ENCODE measurements at regions of chr6 and their contacts with region 1.

Region 1: GRCh38 chr6:156564127-156564806 is 212.9 kb upstream of the ARID1B start:
- DNase-seq: peak; percentile 36
- H3K4me3 ChIP-seq: no peak overlapping the region
- H3K27ac ChIP-seq: no peak overlapping the region
- H3K4me1 ChIP-seq: no peaks in the 10 kb centered on the region
- H3K27me3 ChIP-seq: no peaks in the 10 kb centered on the region
- CTCF ChIP-seq: peak; percentile 87 to 96

Region 2: GRCh38 chr6:155461556-155461955 is 1102.7 kb before region 1 on chr6:
- CTCF ChIA-PET with region 1: no interaction called
- dilution Hi-C with region 1: no loop called
- in situ Hi-C with region 1: no loop called
- intact Hi-C with region 1: no loop called
- DNase-seq: no peak
- H3K4me3 ChIP-seq: no peak overlapping the region
- H3K27ac ChIP-seq: no peak overlapping the region
- H3K4me1 ChIP-seq: no peaks in the 10 kb centered on the region
- H3K27me3 ChIP-seq: no peaks in the 10 kb centered on the region
- CTCF ChIP-seq: no peak

Region 3: GRCh38 chr6:156242206-156242605 is 322.1 kb before region 1 on chr6:
- CTCF ChIA-PET with region 1: no interaction called
- dilution Hi-C with region 1: no loop called
- in situ Hi-C with region 1: no loop called
- intact Hi-C with region 1: no loop called
- DNase-seq: no peak
- H3K4me3 ChIP-seq: no peak overlapping the region
- H3K27ac ChIP-seq: no peak overlapping the region
- H3K4me1 ChIP-seq: no peaks in the 10 kb centered on the region
- H3K27me3 ChIP-seq: no peaks in the 10 kb centered on the region
- CTCF ChIP-seq: no peak

Region 4: DNA sequence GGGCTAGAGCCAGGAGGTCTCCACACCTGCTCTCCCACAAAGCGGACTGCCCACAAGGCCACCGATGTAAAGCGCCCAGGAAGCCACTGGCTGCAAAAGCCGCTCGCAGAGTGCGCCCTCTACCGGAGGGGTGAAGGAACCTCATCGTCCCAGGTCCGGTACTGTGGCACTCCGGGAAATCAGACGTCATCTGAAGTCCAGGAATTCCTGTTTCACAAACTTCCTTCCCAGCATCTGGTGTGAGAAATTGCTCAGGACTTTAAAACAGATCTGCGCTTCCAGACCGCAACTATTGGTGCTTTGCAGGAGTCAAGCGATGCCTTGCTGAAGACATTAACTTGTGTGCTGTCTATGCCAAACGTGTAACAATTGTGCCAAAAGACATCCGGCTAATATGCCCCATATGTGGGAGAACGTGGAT is 97.8 kb after region 1 on chr6:
- CTCF ChIA-PET with region 1: no interaction called
- dilution Hi-C with region 1: no loop called
- in situ Hi-C with region 1: no loop called
- intact Hi-C with region 1: loop called (anchors 1 kb)
- DNase-seq: peak; percentile 74
- H3K4me3 ChIP-seq: peak overlapping the region; percentile 32 to 42 (median 36)
- H3K27ac ChIP-seq: no peak overlapping the region
- H3K4me1 ChIP-seq: peaks cover 3% of the 10 kb centered on the region
- H3K27me3 ChIP-seq: peaks cover 2% of the 10 kb centered on the region
- CTCF ChIP-seq: peak; percentile 82 to 95

Region 5: DNA sequence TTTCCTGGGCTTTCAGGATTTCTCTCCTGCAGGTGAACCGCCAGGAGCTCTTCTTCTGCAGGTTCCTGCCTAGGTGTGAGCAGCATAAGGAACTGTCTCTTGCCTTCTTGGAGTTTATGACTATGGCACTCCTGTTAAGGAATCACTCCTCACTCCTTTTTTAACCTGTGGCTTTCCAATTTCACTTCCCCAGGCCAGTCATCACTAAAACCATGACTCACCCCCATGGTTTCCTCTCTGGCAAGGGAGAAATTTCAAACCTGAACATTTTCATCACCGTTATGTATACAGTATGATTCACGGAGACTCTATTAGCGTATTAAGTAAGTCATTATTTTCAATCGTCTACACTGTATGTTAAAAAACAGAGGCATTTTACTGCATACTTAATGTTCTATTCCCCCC is 134.8 kb after region 1 on chr6:
- CTCF ChIA-PET with region 1: no interaction called
- dilution Hi-C with region 1: no loop called
- in situ Hi-C with region 1: no loop called
- intact Hi-C with region 1: no loop called
- DNase-seq: peak; percentile 94
- H3K4me3 ChIP-seq: no peak overlapping the region
- H3K27ac ChIP-seq: peak overlapping the region; percentile 16
- H3K4me1 ChIP-seq: peaks cover 14% of the 10 kb centered on the region
- H3K27me3 ChIP-seq: no peaks in the 10 kb centered on the region
- CTCF ChIP-seq: no peak

Region 6: GRCh38 chr6:156953479-156954146 is 389.3 kb after region 1 on chr6:
- CTCF ChIA-PET with region 1: no interaction called
- dilution Hi-C with region 1: no loop called
- in situ Hi-C with region 1: no loop called
- intact Hi-C with region 1: loop called (anchors 1 kb)
- DNase-seq: peak; percentile 96
- H3K4me3 ChIP-seq: peak overlapping the region in 1 of 3 experiments; percentile 20
- H3K27ac ChIP-seq: peak overlapping the region; percentile 97
- H3K4me1 ChIP-seq: peaks cover 48% of the 10 kb centered on the region
- H3K27me3 ChIP-seq: no peaks in the 10 kb centered on the region
- CTCF ChIP-seq: peak; percentile 5 to 42

Region 7: DNA sequence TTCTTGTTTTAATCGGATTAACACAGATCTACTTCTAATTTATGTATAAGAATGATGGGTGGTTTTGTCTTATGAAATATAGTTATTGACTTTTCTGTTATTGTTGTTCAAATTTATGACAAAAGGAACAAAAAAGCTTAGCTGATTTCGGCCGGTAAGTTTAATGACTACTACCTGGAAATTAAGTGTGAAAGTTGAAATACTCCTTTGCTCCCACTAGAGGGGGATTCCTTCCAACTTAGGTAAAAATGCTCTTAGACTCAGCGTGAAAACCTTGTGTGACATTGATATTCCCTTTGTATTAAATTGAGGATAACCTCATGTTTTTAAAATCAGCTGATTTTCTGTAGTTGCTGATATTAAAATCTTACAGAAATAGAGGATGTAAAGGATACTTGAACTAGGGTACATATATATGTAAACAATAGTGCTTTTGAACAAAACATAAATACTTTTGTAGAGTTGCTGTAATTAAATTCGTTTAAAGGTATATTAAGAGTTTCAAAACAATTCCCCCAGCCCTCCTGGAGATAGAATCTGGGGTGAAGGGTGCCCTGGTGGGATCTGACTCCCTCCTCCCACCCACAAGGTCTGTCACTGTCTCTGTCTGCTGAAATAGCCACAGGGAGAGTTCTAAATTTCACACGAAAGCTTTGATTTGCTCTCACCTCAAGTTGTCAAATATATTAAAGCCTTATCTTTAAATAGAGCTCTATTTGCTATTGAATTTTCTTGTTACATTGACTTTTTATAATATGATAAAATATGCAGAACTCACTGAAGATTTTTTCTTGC is 470.4 kb after region 1 on chr6:
- CTCF ChIA-PET with region 1: no interaction called
- dilution Hi-C with region 1: no loop called
- in situ Hi-C with region 1: no loop called
- intact Hi-C with region 1: loop called (anchors 10 kb)
- DNase-seq: peak; percentile 58
- H3K4me3 ChIP-seq: peak overlapping the region in 2 of 3 experiments; percentile 25 to 71
- H3K27ac ChIP-seq: peak overlapping the region; percentile 93
- H3K4me1 ChIP-seq: peaks cover 47% of the 10 kb centered on the region
- H3K27me3 ChIP-seq: no peaks in the 10 kb centered on the region
- CTCF ChIP-seq: peak; percentile 59 to 76

Region 8: GRCh38 chr6:157184202-157185020 is 620.1 kb after region 1 on chr6:
- CTCF ChIA-PET with region 1: no interaction called
- dilution Hi-C with region 1: no loop called
- in situ Hi-C with region 1: no loop called
- intact Hi-C with region 1: loop called (anchors 5 kb)
- DNase-seq: peak; percentile 57
- H3K4me3 ChIP-seq: no peak overlapping the region
- H3K27ac ChIP-seq: no peak overlapping the region
- H3K4me1 ChIP-seq: peaks cover 10% of the 10 kb centered on the region
- H3K27me3 ChIP-seq: no peaks in the 10 kb centered on the region
- CTCF ChIP-seq: peak; percentile 93 to 98

Region 9: GRCh38 chr6:157274471-157275226 is 710.4 kb after region 1 on chr6:
- CTCF ChIA-PET with region 1: no interaction called
- dilution Hi-C with region 1: no loop called
- in situ Hi-C with region 1: no loop called
- intact Hi-C with region 1: loop called (anchors 5 kb)
- DNase-seq: peak; percentile 59
- H3K4me3 ChIP-seq: peak overlapping the region; percentile 55 to 81 (median 66)
- H3K27ac ChIP-seq: no peak overlapping the region
- H3K4me1 ChIP-seq: peaks cover 7% of the 10 kb centered on the region
- H3K27me3 ChIP-seq: no peaks in the 10 kb centered on the region
- CTCF ChIP-seq: peak; percentile 55 to 60